ENCODE measurements at regions of chr2 and their contacts with region 1.

Region 1: DNA sequence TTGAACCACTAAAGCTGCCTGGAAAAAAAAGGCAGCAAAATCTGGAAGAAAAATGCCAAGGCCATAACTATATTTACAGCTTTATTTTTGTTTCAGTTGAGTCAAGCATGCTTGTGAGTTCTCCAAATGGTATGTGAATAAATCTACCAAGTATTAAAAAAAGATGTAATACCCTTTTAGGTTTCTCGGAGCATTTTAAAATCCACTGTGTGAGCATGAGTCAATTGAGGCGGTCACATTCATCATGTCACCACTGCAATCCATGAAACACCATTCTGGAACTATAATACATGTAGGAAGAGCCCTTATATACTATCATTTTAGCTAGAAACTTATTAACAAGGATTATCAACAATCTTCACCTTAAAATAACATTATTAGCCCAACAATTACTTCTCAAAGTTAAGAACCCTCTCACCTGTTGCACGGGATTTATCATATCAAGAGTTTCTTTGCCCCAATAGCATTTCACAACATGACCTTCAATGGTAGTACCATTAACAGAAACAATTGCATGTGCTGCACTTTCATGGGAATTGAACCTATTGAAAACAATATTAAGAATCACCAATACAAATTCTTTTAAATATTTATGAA is 24.2 kb upstream of the C2orf42 start:
- DNase-seq: no peak
- H3K4me3 ChIP-seq: no peak overlapping the region
- H3K27ac ChIP-seq: no peak overlapping the region
- H3K4me1 ChIP-seq: no peaks in the 10 kb centered on the region
- H3K27me3 ChIP-seq: no peaks in the 10 kb centered on the region
- CTCF ChIP-seq: no peak

Region 2: GRCh38 chr2:69734035-69734631 is 480.9 kb before region 1 on chr2:
- CTCF ChIA-PET with region 1: no interaction called
- dilution Hi-C with region 1: no loop called
- in situ Hi-C with region 1: no loop called
- intact Hi-C with region 1: no loop called
- DNase-seq: no peak
- H3K4me3 ChIP-seq: no peak overlapping the region
- H3K27ac ChIP-seq: no peak overlapping the region
- H3K4me1 ChIP-seq: no peaks in the 10 kb centered on the region
- H3K27me3 ChIP-seq: no peaks in the 10 kb centered on the region
- CTCF ChIP-seq: no peak

Region 3: GRCh38 chr2:70181363-70181956 is 33.6 kb before region 1 on chr2:
- CTCF ChIA-PET with region 1: no interaction called
- dilution Hi-C with region 1: loop called (anchors 5 kb)
- in situ Hi-C with region 1: no loop called
- intact Hi-C with region 1: no loop called
- DNase-seq: no peak
- H3K4me3 ChIP-seq: no peak overlapping the region
- H3K27ac ChIP-seq: no peak overlapping the region
- H3K4me1 ChIP-seq: no peaks in the 10 kb centered on the region
- H3K27me3 ChIP-seq: no peaks in the 10 kb centered on the region
- CTCF ChIP-seq: no peak

Region 4: GRCh38 chr2:70258532-70258874 is 43.5 kb after region 1 on chr2:
- CTCF ChIA-PET with region 1: no interaction called
- dilution Hi-C with region 1: no loop called
- in situ Hi-C with region 1: no loop called
- intact Hi-C with region 1: no loop called
- DNase-seq: peak; percentile 41
- H3K4me3 ChIP-seq: peak overlapping the region; percentile 46 to 93 (median 75)
- H3K27ac ChIP-seq: peak overlapping the region; percentile 9
- H3K4me1 ChIP-seq: peaks cover 9% of the 10 kb centered on the region
- H3K27me3 ChIP-seq: no peaks in the 10 kb centered on the region
- CTCF ChIP-seq: no peak

Measured in mammary epithelial cell (primary cell).